ENCODE measurements at regions of chr17 and their contacts with region 1.

Region 1: GRCh38 chr17:1764284-1764683 is 2.4 kb downstream of the SERPINF1 start:
- DNase-seq: no peak
- ATAC-seq: no peak
- H3K4me3 ChIP-seq: peak overlapping the region; percentile 33 to 94 (median 88); a peak in 5 of 6 replicates
- H3K27ac ChIP-seq: peak overlapping the region; percentile 99
- H3K4me1 ChIP-seq: peaks cover 64% of the 10 kb centered on the region
- H3K27me3 ChIP-seq: no peaks in the 10 kb centered on the region
- CTCF ChIP-seq: no peak
- EP300 ChIP-seq: no peak
- POLR2A ChIP-seq: 0 out of 4 replicates have a peak, but pooled peaks of 1 of the 2 experiments have one; percentile 18
- RAD21 ChIP-seq: no peak

Region 2: DNA sequence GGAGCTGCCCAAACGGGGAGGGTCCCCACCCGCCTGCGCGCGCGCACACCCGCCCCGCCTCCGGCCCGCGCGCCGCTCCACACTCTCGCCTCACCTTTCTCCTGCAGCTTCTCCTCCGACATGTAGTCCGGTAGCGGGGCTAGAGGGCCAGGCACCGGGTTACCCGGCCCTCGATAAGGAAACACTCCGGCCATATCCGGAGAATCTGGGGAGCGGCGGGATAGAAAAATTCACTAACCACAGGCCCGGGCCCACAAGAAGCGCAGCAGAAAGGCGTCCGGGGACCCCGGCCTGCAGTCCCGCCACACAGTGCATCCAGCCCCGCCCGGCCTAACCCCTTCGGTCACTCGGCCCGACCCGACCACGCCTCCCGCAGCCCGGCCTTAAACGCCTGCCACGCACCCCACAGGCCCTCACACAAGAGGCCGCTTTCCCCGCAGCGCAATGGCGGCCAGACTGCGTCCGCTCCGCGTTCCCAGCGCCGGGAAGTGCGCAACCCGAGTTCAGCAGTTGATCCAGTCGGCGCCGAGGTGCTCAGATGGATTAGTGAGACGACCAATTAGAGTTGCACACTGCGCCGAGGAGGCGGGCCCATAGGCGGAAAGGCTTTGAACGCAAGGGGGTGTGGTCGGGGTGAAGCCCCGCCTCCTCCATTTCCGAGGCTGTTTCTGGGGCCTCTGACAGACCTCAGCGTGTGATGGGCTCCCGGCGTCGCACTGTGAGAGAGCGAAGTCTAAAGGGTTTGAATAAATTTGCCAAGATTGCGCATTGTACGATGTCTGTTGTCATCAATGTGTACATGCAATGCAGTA is 79.7 kb before region 1 on chr17 and contains the start of gene PRPF8:
- CTCF ChIA-PET with region 1: no interaction called
- POLR2A ChIA-PET with region 1: interaction called, 10 read pairs
- in situ Hi-C with region 1: no loop called
- intact Hi-C with region 1: no loop called
- DNase-seq: peak; percentile 94
- ATAC-seq: peak; percentile 99
- H3K4me3 ChIP-seq: peak within 1 kb of the TSS; percentile 88 to 90 (median 89)
- H3K27ac ChIP-seq: peak within 1 kb of the TSS; percentile 88
- H3K4me1 ChIP-seq: peaks cover 28% of the 10 kb centered on the region
- H3K27me3 ChIP-seq: no peaks in the 10 kb centered on the region
- CTCF ChIP-seq: no peak
- EP300 ChIP-seq: 0 out of 4 replicates have a peak, but pooled peaks of 1 of the 2 experiments have one; percentile 7
- POLR2A ChIP-seq: peak; percentile 92 to 93
- RAD21 ChIP-seq: no peak; the same call in 1 of the 2 replicates
- total RNA-seq, gene PRPF8: 112 and 318 TPM in 2 replicates

Region 3: GRCh38 chr17:1730328-1731193 is 33.7 kb before region 1 on chr17:
- CTCF ChIA-PET with region 1: no interaction called
- POLR2A ChIA-PET with region 1: interaction called, 283 read pairs
- in situ Hi-C with region 1: no loop called
- intact Hi-C with region 1: no loop called
- DNase-seq: no peak
- ATAC-seq: peak; percentile 6; the same call in 2 of the 3 replicates
- H3K4me3 ChIP-seq: no peak overlapping the region
- H3K27ac ChIP-seq: no peak overlapping the region
- H3K4me1 ChIP-seq: peaks cover 49% of the 10 kb centered on the region
- H3K27me3 ChIP-seq: no peaks in the 10 kb centered on the region
- CTCF ChIP-seq: no peak
- EP300 ChIP-seq: no peak
- POLR2A ChIP-seq: no peak
- RAD21 ChIP-seq: no peak

Region 4: DNA sequence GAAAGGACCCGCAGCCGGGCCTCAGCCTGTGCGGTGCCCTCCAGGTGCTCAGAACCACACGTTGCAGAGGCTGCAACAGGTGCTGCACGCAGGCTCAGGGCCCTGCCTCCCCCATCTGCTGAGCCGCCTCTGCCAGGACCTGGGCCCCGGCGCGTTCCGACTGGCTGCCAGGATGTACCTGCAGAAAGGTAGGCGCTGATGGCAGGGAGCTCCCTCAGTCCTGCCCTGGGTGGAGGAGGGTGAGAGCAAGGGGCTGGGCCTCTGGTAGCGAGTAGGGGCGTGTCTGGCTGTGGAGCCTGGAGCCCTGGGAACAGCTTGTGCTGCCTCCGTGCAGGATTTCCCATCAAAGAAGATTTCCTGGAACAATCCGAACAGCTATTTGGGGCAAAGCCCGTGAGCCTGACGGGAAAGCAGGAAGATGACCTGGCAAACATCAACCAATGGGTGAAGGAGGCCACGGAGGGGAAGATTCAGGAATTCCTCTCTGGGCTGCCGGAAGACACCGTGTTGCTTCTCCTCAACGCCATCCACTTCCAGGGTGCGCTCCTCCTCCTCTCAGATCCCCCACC is 17.2 kb before region 1 on chr17:
- CTCF ChIA-PET with region 1: no interaction called
- POLR2A ChIA-PET with region 1: interaction called, 174 read pairs
- in situ Hi-C with region 1: no loop called
- intact Hi-C with region 1: loop called (anchors 1 kb)
- DNase-seq: no peak
- ATAC-seq: no peak
- H3K4me3 ChIP-seq: no peak overlapping the region
- H3K27ac ChIP-seq: peak overlapping the region; percentile 11
- H3K4me1 ChIP-seq: peaks cover 60% of the 10 kb centered on the region
- H3K27me3 ChIP-seq: no peaks in the 10 kb centered on the region
- CTCF ChIP-seq: no peak
- EP300 ChIP-seq: no peak
- POLR2A ChIP-seq: peak in 1 of 2 experiments; percentile 20; a peak in 1 of 4 replicates
- RAD21 ChIP-seq: no peak

Region 5: GRCh38 chr17:1783834-1784611 is 19.7 kb after region 1 on chr17:
- CTCF ChIA-PET with region 1: no interaction called
- POLR2A ChIA-PET with region 1: interaction called, 49 read pairs
- in situ Hi-C with region 1: no loop called
- intact Hi-C with region 1: no loop called
- DNase-seq: peak; percentile 67
- ATAC-seq: peak; percentile 87
- H3K4me3 ChIP-seq: no peak overlapping the region
- H3K27ac ChIP-seq: no peak overlapping the region
- H3K4me1 ChIP-seq: peaks cover 7% of the 10 kb centered on the region
- H3K27me3 ChIP-seq: no peaks in the 10 kb centered on the region
- CTCF ChIP-seq: peak; percentile 83
- EP300 ChIP-seq: no peak
- POLR2A ChIP-seq: no peak
- RAD21 ChIP-seq: peak; percentile 84

Region 6: DNA sequence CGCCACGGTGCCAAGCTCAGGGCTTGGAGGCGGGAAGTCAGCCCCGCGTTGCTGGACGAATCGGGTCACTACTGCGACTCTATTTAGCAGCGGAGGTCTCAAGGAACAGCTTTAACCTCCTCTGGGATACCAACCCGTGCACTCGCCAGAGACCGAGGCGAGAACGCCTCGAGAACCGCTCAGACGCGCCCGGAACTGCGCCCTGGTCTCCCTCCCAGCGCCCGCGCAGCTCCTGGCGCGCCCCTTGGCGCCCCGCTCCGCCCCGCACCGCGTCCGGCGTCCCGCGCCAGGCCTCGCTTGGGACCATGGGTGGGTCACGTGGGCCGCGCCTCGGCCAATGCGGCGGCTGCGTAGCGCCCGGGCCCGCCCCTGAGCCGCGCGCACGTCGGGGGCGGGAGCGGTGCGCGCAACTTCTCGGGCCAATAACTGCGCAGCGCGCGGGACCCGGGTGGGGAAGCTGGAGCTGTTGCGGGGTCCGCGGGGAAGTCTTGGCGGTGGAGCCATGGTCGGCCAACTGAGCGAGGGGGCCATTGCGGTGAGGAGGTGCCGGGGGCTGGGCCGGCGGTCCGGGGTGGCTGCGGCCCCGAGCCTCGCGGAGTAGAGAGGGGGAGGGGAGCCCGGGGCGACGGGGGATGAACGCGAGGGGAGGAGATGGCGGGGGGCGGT is 65.4 kb after region 1 on chr17 and contains the starts of genes RPA1 and SMYD4:
- CTCF ChIA-PET with region 1: no interaction called
- POLR2A ChIA-PET with region 1: interaction called, 24 read pairs
- in situ Hi-C with region 1: no loop called
- intact Hi-C with region 1: no loop called
- DNase-seq: peak; percentile 75
- ATAC-seq: peak; percentile 100
- H3K4me3 ChIP-seq: peak within 1 kb of the TSS; percentile 66 to 88 (median 84)
- H3K27ac ChIP-seq: peak within 1 kb of the TSS; percentile 73
- H3K4me1 ChIP-seq: peaks cover 29% of the 10 kb centered on the region
- H3K27me3 ChIP-seq: no peaks in the 10 kb centered on the region; a peak in 1 of 5 replicates
- CTCF ChIP-seq: peak; percentile 7; the same call in 1 of the 2 replicates
- EP300 ChIP-seq: no peak; a peak in 1 of 4 replicates
- POLR2A ChIP-seq: peak; percentile 74 to 93
- RAD21 ChIP-seq: peak; percentile 20; the same call in 1 of the 2 replicates
- total RNA-seq, gene RPA1: 13.9 and 53.3 TPM in 2 replicates
- total RNA-seq, gene SMYD4: 9.8 and 11.3 TPM in 2 replicates

Region 7: DNA sequence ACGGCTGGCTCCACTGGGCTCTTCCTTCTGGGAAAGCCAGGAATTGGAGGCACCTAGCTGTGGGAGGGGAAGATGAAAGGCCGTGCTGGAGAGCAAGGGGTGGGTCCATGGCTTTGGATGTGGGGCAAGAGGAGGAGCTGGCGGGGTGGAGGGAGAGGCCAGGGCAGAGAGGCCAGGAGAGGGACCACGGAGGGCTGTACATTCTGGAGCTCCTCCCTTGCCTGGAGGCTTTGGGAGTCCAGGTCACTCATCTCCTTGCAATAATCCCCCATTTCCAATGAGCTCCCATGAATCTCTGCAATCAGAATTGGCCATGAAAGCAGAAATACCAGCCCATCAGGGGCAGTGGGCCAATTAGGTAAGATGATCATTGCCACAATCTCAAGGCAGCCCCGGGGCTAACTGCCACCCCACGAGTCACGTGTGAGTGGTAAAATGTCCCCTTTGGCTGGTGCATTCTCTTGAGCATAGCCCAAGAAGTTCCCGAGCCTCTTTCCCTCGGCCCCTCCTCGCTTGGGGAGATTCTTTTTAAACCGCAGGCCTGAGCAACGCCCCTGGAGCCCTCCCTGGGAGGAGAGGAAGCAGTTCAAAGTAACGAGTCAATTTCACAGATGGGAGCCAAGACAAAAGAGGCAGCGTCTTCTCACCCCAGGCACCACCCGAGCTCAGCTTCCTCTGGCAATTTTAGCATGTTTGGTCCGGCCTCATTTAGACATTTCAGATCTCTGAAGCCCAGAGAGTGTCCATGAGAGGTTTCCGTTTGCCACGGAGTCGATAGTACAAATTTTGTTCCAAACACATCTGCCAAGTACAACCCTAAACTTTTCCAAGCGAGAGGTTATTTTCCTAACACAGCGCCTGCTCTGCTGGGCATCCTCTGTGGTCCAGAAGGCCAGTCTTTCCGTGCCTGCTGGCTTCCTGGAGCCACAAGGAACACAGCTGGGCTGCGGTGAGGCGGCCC is 247.4 kb after region 1 on chr17:
- CTCF ChIA-PET with region 1: no interaction called
- POLR2A ChIA-PET with region 1: no interaction called
- in situ Hi-C with region 1: no loop called
- intact Hi-C with region 1: no loop called
- DNase-seq: no peak
- ATAC-seq: no peak; the same call in 2 of the 3 replicates
- H3K4me3 ChIP-seq: no peak overlapping the region
- H3K27ac ChIP-seq: no peak overlapping the region
- H3K4me1 ChIP-seq: no peaks in the 10 kb centered on the region
- H3K27me3 ChIP-seq: peaks cover 0 to under 1% of the 10 kb centered on the region in 2 experiments; a peak in 1 of 5 replicates
- CTCF ChIP-seq: no peak
- EP300 ChIP-seq: no peak
- POLR2A ChIP-seq: no peak
- RAD21 ChIP-seq: no peak